Aorta (tissue), 5 donors: ENCODE measurements at regions of chr1 and their contacts with region 1.

Region 1: GRCh38 chr1:100895540-100896483 is at the start of gene SLC30A7:
- DNase-seq: peak; percentile 97 to 99
- ATAC-seq: peak; percentile 97
- H3K4me3 ChIP-seq: peak within 1 kb of the TSS; percentile 31 to 70
- H3K27ac ChIP-seq: peak within 1 kb of the TSS; percentile 50 to 81
- H3K4me1 ChIP-seq: no peaks in the 10 kb centered on the region
- H3K27me3 ChIP-seq: no peaks in the 10 kb centered on the region
- total RNA-seq, gene SLC30A7: 26.1 to 36.2 TPM

Region 2: DNA sequence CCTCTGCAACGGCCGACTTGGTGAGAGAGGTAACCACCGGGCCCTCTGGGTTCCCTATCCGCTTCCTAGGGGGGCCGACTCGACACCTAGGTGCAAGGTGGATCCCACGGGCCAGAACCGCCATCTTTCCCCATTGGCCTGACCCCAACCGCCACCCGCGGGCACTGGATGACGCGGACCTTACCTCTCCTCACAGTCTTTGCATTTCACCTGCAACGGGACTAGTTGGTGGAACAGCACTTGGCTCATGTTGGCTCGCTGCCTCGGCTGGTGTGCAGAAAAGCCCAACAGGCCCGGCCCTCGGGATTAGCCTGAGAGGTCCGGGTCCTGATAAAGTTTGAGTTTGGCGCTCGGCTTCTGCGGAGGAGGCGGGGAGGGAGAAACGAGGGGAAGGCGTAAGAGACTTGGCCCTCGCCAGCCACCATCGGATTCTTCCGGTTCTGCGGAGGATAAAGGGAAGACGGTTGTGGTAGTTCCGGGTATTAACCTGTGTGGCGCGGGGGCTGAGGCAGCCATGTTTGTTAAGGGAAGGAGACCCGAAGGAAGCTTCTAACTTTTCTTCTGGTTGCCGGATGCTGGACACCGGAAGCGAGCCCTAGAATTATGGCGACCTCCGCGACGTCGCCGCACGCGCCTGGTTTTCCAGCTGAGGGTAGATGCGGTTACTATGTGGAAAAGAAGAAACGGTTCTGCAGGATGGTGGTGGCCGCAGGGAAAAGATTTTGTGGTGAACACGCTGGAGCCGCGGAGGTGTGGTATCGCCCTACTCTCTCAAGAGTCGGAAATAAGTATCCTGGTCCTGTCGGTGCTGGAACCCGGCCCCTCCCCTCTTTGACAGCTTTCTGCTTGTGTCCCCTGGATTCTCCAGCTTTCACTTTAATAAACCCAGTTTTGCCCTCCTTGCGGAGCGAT is 763.0 kb before region 1 on chr1 and contains the starts of genes SASS6 and TRMT13:
- intact Hi-C with region 1: loop called in 1 of 2 experiments (anchors 10 kb)
- DNase-seq: peak; percentile 98
- ATAC-seq: peak; percentile 100
- H3K4me3 ChIP-seq: peak within 1 kb of the TSS; percentile 78 to 91
- H3K27ac ChIP-seq: peak within 1 kb of the TSS in 1 of 2 donors; percentile 16
- H3K4me1 ChIP-seq: peaks cover 0 to 2% of the 10 kb centered on the region in 2 donors
- H3K27me3 ChIP-seq: no peaks in the 10 kb centered on the region
- total RNA-seq, gene SASS6: 2.1 to 2.5 TPM
- total RNA-seq, gene TRMT13: 11.7 to 18.4 TPM

Region 3: GRCh38 chr1:100249537-100250257 is 646.1 kb before region 1 on chr1 and contains the start of gene DBT:
- intact Hi-C with region 1: loop called in 1 of 2 experiments (anchors 10 kb)
- DNase-seq: peak; percentile 96 to 97
- ATAC-seq: peak; percentile 100
- H3K4me3 ChIP-seq: peak within 1 kb of the TSS; percentile 75 to 91
- H3K27ac ChIP-seq: peak within 1 kb of the TSS; percentile 47 to 90
- H3K4me1 ChIP-seq: peaks cover 0 to 3% of the 10 kb centered on the region in 2 donors
- H3K27me3 ChIP-seq: peaks cover 0 to 2% of the 10 kb centered on the region in 2 donors
- total RNA-seq, gene DBT: 10.8 to 13.0 TPM

Region 4: GRCh38 chr1:100351095-100351891 is 544.5 kb before region 1 on chr1:
- intact Hi-C with region 1: loop called in 1 of 2 experiments (anchors 5 kb)
- DNase-seq: peak; percentile 90 to 95
- ATAC-seq: peak; percentile 89
- H3K4me3 ChIP-seq: peak overlapping the region; percentile 86 to 93
- H3K27ac ChIP-seq: peak overlapping the region in 1 of 2 donors; percentile 85
- H3K4me1 ChIP-seq: peaks cover 0 to 2% of the 10 kb centered on the region in 2 donors
- H3K27me3 ChIP-seq: no peaks in the 10 kb centered on the region

Region 5: DNA sequence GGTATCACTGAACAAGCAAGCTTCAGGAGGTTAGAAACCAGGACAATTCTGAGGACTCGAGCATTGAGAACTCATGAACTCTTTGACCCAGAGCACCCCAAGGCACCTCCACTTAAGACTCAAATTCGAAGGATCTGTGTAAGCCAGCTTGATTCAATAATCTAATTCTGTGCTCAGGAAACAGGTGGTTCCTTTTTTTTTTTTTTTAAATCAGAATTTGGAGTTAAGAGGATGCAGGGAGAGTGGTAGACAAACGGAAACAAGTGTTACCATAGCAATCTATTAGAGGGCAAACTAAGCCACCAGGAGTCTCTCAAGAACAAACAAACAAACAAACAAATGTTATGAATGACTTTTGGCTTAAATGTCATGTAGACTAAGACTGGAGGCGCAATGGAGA is 183.5 kb after region 1 on chr1:
- intact Hi-C with region 1: no loop called
- DNase-seq: no peak
- ATAC-seq: no peak
- H3K4me3 ChIP-seq: no peak overlapping the region
- H3K27ac ChIP-seq: no peak overlapping the region
- H3K4me1 ChIP-seq: no peaks in the 10 kb centered on the region
- H3K27me3 ChIP-seq: no peaks in the 10 kb centered on the region

Region 6: DNA sequence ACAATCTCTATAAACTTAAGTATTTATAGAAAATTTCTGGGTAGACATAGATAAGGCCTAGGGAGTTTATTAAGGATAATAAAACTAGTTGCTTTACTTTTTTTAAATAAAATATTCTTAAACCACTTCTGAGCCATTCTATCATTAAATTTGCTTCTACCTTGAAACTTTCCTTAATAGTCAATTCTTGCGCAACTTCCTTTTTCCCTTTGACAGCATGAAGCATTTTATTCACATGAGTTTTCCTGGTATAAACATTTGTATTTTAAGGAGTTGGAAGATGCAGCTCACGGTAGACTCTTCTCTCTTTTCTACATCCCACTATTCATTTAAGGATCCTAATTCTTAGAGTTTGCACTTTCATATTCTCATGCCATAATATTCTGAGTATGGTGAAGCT is 205.6 kb after region 1 on chr1:
- intact Hi-C with region 1: no loop called
- DNase-seq: no peak
- ATAC-seq: no peak
- H3K4me3 ChIP-seq: no peak overlapping the region
- H3K27ac ChIP-seq: no peak overlapping the region
- H3K4me1 ChIP-seq: peaks cover 1 to 3% of the 10 kb centered on the region in 2 donors
- H3K27me3 ChIP-seq: no peaks in the 10 kb centered on the region